Astrocyte of the cerebellum (primary cell): ENCODE measurements at regions of chr1 and their contacts with region 1.

Region 1: DNA sequence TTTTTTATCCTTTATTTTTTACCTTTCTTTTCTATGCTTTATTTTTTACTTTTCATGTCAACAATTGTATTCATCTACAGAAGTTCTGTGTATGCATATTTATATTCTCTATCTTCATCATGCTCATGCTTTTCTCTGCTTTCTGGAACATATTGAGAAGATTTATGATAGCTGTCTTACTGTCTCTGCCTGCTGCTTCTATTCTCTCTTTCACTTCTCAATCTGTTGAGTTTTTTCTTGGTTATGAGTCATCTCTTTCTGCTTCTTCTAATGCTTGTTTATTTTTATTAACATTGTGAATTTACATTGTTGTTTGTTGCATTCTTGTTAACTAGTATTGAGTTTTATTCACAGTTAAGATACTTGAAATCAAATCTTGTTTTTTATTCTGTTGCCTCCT is 22.6 kb downstream of the F5 start:
- DNase-seq: no peak
- H3K4me3 ChIP-seq: no peak overlapping the region
- CTCF ChIP-seq: no peak

Region 2: GRCh38 chr1:169529068-169529696 is 34.5 kb before region 1 on chr1:
- in situ Hi-C with region 1: loop called (anchors 5 kb)
- DNase-seq: no peak
- H3K4me3 ChIP-seq: no peak overlapping the region
- CTCF ChIP-seq: no peak

Region 3: GRCh38 chr1:169601093-169601881 is 37.6 kb after region 1 on chr1:
- in situ Hi-C with region 1: no loop called
- DNase-seq: peak; percentile 12
- H3K4me3 ChIP-seq: no peak overlapping the region
- CTCF ChIP-seq: peak; percentile 26